ENCODE measurements at regions of chr18 and their contacts with region 1.

Region 1: DNA sequence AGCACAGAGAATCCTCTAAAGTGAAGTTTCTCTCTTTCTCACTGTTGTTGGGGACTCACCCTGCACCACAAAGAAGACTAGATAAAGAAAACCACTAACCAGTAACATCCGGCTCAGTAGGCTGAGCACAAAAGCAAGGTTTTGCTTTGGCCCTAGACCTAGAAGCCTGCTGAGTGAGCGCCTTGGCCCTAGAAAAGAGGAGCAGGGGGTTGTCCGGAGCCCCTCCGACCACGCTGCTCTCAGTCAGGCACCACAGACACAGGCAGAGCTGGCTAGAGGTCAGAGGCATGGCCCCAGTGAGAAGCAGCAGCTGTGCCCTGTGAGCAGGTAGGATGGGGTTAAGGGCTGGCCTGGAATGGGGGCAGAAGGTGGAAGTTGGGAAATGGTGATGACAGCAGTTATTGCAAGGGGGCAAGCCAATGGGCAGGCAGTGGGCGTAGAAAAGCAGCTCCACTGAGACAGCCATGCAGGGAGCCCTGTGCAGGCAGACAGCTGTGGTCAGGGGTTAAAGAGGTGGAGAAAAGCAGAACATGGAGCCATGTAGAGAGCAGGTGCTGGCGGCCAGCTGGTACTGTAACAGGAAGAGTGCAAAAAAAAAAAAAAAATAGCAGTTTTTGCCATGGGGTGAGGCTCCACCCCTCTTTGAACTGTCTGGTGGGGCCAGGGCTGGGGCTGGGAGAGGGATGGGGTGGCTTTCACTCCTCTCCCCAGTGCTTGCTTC is 36.9 kb upstream of the SLC14A1 start:
- DNase-seq: peak; percentile 79
- ATAC-seq: peak; percentile 77
- H3K4me3 Mint-ChIP-seq: peak overlapping the region; percentile 94
- H3K27ac Mint-ChIP-seq: peak overlapping the region; percentile 99
- H3K4me1 Mint-ChIP-seq: peaks cover 61% of the 10 kb centered on the region
- H3K27me3 Mint-ChIP-seq: peaks cover under 1% of the 10 kb centered on the region

Region 2: DNA sequence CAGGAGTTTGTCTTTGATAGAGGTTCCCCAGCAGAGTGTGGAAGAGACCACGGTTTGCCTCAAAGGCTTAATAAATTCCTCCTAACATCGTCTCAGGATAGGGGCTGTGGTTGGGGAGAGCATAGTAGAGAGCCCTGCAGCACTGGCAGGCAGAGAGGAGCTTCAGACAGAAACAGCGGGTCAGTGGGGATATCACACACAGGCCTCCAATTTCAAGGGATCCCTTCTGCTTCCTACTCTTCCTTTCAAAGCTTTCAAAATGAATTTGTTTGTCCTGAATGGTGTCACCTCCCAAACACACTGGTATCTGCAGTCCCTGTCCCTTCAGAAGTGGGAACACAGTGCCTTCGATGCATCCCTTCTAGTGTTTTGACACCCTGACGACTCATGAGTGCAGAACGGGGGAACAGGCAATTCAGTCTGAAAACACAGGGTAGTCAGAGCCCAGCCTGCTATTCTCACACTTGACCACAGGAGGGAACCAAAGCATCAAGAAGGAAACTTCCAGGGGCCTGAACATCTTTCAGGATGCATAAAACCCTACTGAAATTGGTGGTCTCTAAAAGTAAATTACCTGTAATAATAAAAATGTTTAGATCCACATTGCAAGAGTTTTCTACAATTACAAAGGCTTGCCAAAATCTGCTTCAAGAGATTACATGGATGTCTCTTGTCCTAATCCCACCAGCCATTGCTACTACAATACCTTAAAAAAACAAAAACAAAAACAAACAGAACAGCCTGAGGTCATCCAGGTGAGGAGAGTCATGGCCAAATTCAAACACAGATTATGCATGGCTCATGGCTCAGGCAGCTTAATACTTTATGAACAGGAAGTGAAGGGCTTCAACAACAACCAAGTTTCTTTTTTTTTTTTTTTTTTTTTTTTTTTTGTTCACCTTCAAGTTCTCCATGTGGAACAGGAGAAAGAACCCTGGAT is 22.0 kb before region 1 on chr18:
- POLR2A ChIA-PET with region 1: interaction called, 117 read pairs
- DNase-seq: no peak
- ATAC-seq: peak; percentile 43
- H3K4me3 Mint-ChIP-seq: peak overlapping the region; percentile 54
- H3K27ac Mint-ChIP-seq: peak overlapping the region; percentile 89
- H3K4me1 Mint-ChIP-seq: peaks cover 49% of the 10 kb centered on the region
- H3K27me3 Mint-ChIP-seq: peaks cover 2% of the 10 kb centered on the region

Region 3: GRCh38 chr18:45670281-45670962 is 16.6 kb before region 1 on chr18:
- POLR2A ChIA-PET with region 1: interaction called, 117 read pairs
- DNase-seq: no peak
- ATAC-seq: peak; percentile 46
- H3K4me3 Mint-ChIP-seq: peak overlapping the region; percentile 59
- H3K27ac Mint-ChIP-seq: peak overlapping the region; percentile 83
- H3K4me1 Mint-ChIP-seq: peaks cover 54% of the 10 kb centered on the region
- H3K27me3 Mint-ChIP-seq: no peaks in the 10 kb centered on the region

Region 4: GRCh38 chr18:45755934-45756333 is 68.9 kb after region 1 on chr18:
- POLR2A ChIA-PET with region 1: no interaction called
- DNase-seq: no peak
- ATAC-seq: no peak
- H3K4me3 Mint-ChIP-seq: no peak overlapping the region
- H3K27ac Mint-ChIP-seq: no peak overlapping the region
- H3K4me1 Mint-ChIP-seq: peaks cover 7% of the 10 kb centered on the region
- H3K27me3 Mint-ChIP-seq: peaks cover 9% of the 10 kb centered on the region